CD4-positive, alpha-beta T cell (primary cell): ENCODE measurements at regions of chr2 and their contacts with region 1.

Region 1: DNA sequence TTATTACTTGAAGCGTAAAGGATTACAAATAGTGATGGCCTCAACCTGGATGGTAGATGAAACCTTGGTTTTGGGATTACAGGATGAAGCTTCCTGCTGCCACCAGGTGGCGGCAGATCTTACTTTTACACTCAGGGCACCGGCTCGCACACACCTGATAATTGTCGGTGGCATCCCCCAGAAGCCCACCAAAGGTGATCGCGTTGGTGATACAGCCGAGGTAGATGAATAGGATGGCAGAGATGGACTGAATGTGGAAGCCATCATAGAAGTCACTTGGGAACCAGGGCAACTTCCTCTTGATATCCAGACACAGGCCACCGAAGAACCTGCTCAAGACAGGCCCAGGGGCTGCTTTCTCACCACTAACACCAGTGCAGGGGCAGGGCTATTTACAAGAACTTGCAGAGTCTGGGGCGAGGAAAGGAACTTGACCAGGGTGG is 51.8 kb downstream of the MTHFD2 start:
- DNase-seq: peak; percentile 27 to 79 (median 46)
- ATAC-seq: peak; percentile 56
- H3K4me3 ChIP-seq: no peak overlapping the region
- H3K4me3 Mint-ChIP-seq: no peak overlapping the region
- H3K27ac ChIP-seq: no peak overlapping the region
- H3K27ac Mint-ChIP-seq: no peak overlapping the region
- H3K4me1 ChIP-seq: peaks cover 5% of the 10 kb centered on the region
- H3K4me1 Mint-ChIP-seq: no peaks in the 10 kb centered on the region
- H3K27me3 ChIP-seq: no peaks in the 10 kb centered on the region
- H3K27me3 Mint-ChIP-seq: no peaks in the 10 kb centered on the region
- CTCF ChIP-seq: peak; percentile 84

Region 2: DNA sequence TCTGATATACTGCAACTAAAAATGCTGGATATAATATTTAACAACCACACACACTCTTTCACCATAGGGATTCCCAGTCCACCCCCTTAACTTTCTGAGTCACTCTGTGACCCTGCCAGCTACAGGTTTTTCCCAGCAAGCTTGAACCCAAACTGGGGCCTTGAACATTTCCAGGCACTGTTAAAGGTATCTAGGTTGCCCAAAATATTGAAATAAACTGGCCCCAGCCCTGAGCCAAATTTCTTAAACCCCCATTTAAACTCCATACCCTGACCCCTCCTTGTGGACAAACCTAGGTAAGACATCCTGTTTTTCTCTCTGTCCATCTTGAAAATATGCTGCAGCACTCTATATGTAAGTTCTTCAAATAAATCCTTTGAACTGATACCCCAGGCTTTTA is 149.6 kb after region 1 on chr2:
- CTCF ChIA-PET with region 1: no interaction called
- POLR2A ChIA-PET with region 1: no interaction called
- intact Hi-C with region 1: loop called (anchors 2 to 5 kb)
- DNase-seq: peak in 4 of 14 experiments; percentile 10 to 66 (median 58)
- ATAC-seq: peak; percentile 71
- H3K4me3 ChIP-seq: no peak overlapping the region
- H3K4me3 Mint-ChIP-seq: no peak overlapping the region
- H3K27ac ChIP-seq: no peak overlapping the region
- H3K27ac Mint-ChIP-seq: no peak overlapping the region
- H3K4me1 ChIP-seq: no peaks in the 10 kb centered on the region
- H3K4me1 Mint-ChIP-seq: no peaks in the 10 kb centered on the region
- H3K27me3 ChIP-seq: no peaks in the 10 kb centered on the region
- H3K27me3 Mint-ChIP-seq: no peaks in the 10 kb centered on the region
- CTCF ChIP-seq: peak; percentile 59

Region 3: DNA sequence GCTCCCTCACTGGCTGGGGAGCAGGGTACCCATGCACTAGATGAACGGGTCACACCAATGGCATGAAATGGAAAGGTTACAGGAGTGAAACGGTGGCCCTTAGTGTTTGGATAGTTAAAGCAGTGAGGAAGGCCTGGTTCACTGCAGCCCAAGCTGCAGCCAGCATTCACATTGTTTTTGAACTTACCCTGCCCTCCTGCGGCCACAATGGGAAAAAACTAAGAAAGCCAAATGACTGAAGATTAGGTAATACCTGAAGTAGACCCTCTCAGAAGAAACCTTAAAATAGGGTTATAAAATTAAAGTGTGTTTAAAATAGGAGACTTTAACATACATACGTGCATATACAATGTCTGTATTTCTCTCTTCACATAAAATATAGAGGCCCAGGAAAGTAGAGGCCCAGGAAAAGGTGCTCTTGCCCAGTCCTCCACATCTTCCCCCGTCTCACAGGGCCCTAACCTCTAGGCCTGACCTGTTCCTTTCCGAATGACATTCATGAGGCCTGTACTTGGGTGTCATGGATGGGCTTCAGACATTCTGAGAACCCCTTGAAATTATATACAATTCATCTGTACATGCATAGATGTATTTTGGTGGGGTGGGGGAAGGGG is 337.6 kb after region 1 on chr2:
- CTCF ChIA-PET with region 1: no interaction called
- POLR2A ChIA-PET with region 1: no interaction called
- intact Hi-C with region 1: loop called in 1 of 2 experiments (anchors 1 kb)
- DNase-seq: peak; percentile 34 to 81 (median 50)
- ATAC-seq: peak; percentile 84
- H3K4me3 ChIP-seq: no peak overlapping the region
- H3K4me3 Mint-ChIP-seq: no peak overlapping the region
- H3K27ac ChIP-seq: no peak overlapping the region
- H3K27ac Mint-ChIP-seq: no peak overlapping the region
- H3K4me1 ChIP-seq: peaks cover 5% of the 10 kb centered on the region
- H3K4me1 Mint-ChIP-seq: peaks cover 13% of the 10 kb centered on the region
- H3K27me3 ChIP-seq: peaks cover 0 to 7% of the 10 kb centered on the region in 2 experiments
- H3K27me3 Mint-ChIP-seq: peaks cover 16% of the 10 kb centered on the region
- CTCF ChIP-seq: peak; percentile 59